ENCODE measurements at regions of chr11 and their contacts with region 1.

Region 1: DNA sequence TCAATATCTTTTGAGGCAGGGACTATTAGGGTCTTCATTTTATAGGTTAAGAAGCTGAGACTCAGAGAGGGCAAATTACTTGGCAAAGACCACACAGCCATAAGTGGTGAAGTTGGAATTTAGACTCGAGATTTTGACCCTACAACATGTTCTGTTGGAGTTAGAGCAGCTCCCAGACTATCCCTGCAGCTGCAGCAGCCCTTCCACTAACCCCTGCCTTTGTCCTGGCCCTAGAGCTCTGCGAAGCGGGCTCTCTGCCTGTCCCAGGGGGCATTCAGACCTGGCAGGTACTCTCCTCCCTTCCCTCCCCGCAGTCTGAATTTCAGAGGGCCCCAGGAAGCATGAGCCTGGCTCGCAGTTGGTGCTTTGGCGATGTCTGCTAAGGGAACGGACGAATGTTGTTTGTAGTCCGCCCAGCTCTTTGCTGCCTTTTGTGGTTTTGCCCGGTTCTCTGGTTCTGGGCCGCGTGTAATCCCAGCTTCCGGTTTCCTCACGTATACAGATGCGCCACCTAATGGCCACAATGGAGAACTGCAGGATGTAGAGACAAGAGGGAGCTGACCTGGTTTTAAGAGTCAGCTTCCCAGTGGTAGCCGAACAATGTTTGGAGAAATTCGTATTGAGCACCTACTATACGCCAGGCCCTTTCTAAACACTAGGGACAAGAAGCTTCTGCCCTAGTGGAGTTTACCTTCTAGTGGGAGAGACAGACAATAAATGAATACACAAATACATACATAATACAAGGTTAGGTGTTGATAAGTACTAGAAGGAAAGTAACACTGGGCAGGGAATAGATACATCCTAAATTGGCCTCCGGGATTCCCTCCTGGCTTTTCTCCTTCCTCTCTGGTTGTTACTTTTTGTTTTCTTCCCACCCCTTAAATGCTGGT is 125.2 kb downstream of the ST3GAL4 start:
- DNase-seq: peak; percentile 83
- H3K4me3 ChIP-seq: peak overlapping the region; percentile 25; the same call in 1 of the 2 replicates
- H3K27ac ChIP-seq: peak overlapping the region; percentile 82
- H3K27me3 ChIP-seq: peaks cover 4% of the 10 kb centered on the region
- CTCF ChIP-seq: peak; percentile 94

Region 2: GRCh38 chr11:125835748-125836147 is 644.9 kb before region 1 on chr11:
- CTCF ChIA-PET with region 1: no interaction called
- POLR2A ChIA-PET with region 1: no interaction called
- DNase-seq: no peak
- H3K4me3 ChIP-seq: no peak overlapping the region
- H3K27ac ChIP-seq: no peak overlapping the region
- H3K27me3 ChIP-seq: no peaks in the 10 kb centered on the region
- CTCF ChIP-seq: no peak

Region 3: DNA sequence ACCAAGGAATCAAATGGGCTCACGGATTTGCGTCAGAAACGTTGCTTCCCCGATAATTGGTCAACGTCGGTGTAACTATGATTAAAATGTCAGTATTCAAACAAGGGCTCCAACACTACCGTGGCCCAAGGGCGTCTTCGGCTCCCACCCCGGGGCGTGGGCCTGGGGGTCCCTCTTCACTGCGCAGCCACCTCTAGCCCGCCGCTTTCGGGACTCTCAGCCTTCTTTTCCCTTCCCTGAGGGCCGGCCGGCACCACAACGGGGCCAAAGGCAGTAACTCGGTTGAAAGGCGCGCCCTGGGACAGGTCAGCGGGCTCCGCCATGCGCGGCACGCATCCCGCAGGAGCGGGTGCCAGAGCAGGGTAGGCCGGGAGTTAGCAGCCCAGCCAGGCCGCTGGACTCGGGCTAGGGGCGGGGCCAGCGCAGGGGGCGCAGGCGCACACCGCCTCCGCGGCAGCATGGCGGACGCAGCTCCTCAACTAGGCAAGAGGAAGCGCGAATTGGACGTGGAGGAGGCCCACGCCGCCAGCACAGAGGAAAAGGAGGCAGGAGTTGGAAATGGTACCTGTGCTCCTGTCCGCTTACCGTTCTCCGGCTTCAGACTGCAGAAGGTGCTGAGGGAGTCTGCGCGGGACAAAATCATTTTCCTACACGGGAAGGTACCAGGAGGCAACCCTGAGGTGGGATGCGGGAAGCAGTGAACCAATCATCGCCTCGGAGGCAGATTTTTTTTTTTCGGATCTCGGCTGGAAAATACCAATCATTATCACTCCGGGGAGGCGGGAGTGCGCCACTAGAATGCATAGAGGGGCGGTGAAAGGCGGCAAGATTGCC is 176.8 kb before region 1 on chr11 and contains the start of gene DCPS:
- CTCF ChIA-PET with region 1: interaction called, 21 read pairs
- POLR2A ChIA-PET with region 1: no interaction called
- DNase-seq: peak; percentile 60
- H3K4me3 ChIP-seq: peak within 1 kb of the TSS; percentile 92
- H3K27ac ChIP-seq: peak within 1 kb of the TSS; percentile 93
- H3K27me3 ChIP-seq: no peaks in the 10 kb centered on the region
- CTCF ChIP-seq: no peak
- polyA plus RNA-seq, gene DCPS: 20.4 and 24.3 TPM in 2 replicates

Region 4: DNA sequence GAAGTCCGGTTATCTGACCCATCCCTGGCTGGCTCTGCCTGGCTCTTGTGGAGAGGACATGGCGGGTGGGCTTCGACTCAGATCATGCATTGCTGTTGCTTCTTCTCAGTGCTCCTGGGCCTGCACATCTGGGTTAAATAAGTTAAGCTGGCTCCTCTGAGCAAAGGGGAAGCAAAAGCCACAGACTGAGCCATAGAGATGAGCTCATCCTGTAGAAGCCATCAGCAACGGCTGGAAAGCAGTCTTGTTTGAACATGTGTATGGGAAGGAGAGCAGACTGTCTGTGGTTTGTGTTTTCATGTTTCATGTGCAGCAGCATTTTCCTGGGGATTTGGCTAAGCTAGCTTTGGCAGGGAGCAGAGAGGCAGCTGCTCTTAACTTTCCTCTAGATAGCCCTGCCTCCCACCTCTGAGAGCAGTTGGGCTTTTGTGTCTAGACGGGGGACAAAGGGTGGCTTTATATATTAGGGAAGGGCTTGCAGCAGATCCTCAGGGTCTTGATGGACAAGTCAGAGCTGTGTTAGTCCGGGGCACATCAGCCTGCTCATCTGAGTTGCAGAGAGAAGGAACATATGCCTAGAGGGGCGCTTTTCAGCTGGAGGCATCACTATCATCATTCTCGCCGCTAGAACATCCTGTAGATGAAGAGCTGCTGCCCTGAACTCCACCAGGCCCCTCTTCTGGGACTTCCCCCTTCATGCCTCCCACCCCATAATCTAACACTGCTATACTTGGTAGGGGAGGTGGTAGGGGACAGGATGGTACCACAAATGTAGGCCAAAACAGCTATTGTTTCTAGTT is 161.9 kb before region 1 on chr11:
- CTCF ChIA-PET with region 1: interaction called, 163 read pairs
- POLR2A ChIA-PET with region 1: interaction called, 3 read pairs
- DNase-seq: peak; percentile 88
- H3K4me3 ChIP-seq: peak overlapping the region; percentile 49
- H3K27ac ChIP-seq: peak overlapping the region; percentile 99
- H3K27me3 ChIP-seq: no peaks in the 10 kb centered on the region
- CTCF ChIP-seq: no peak

Region 5: DNA sequence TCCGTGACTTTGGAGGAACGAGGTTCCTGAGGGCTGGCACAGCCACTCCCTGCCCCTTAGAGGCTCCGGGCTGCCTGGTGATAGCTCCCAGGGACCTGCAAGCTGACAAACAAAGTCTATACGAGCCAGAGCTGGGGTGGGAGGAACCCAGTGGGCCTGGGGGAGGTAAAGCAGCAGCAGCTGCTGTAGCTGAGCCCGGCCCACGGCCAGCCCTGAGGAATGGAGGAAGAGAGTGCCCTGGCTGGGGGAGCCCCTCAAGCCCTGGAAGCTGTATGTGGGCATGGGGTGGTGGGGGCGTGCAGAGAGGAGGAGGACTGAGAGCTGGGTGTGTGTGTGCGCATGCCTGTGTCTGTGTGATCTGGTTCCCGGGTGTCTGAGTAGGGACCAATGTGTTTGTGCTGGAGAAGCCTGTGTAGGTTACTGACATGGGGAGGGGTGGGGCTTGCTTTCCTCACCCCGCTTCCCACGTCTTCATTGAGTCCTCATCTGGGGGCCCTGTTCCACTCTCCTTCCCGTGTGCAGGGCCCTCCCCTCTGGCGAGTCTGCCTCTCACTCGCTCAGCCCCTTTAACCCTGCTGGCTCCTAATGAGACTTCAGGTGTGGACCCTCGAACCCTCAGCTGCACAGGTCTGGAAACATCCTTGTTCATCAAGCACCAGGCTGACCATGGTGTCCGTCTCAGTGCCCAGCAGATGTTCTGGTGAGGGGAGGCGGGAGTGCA is 114.4 kb before region 1 on chr11:
- CTCF ChIA-PET with region 1: no interaction called
- POLR2A ChIA-PET with region 1: no interaction called
- DNase-seq: no peak
- H3K4me3 ChIP-seq: no peak overlapping the region
- H3K27ac ChIP-seq: no peak overlapping the region
- H3K27me3 ChIP-seq: no peaks in the 10 kb centered on the region
- CTCF ChIP-seq: no peak

Region 6: DNA sequence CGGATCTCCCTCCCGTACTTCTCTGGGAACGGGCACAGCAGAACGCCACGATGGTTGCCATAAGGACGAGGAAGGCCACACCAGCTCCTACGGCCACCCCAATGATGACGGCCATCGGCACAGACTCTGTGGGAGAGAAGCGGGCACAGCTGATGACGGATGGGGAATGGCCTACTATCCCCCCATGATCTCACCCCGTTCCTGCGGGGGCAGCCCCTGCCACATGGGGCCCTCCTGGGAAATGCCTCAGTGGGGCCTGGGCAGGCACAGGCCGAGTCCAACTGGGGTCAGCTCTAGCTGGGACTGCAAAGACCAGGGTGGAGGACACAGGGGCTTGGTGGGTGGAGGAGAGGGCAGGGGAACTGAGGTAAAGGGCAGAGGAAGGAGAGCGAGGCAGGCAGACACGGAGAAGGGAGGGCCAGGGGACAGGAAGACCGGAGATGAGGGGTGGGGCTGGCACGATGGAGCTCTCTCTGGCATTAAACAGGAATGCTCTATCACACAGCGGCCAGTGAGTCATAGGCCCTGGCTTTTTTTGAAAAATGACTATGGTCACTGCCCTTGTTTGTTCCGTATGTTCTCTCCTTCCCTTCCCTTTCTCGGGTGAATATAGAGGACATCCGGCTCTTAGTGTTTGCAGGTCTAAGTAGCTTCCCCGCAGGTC is 49.1 kb before region 1 on chr11:
- CTCF ChIA-PET with region 1: interaction called, 22 read pairs
- POLR2A ChIA-PET with region 1: no interaction called
- DNase-seq: no peak
- H3K4me3 ChIP-seq: no peak overlapping the region
- H3K27ac ChIP-seq: peak overlapping the region; percentile 21
- H3K27me3 ChIP-seq: no peaks in the 10 kb centered on the region
- CTCF ChIP-seq: no peak

Region 7: DNA sequence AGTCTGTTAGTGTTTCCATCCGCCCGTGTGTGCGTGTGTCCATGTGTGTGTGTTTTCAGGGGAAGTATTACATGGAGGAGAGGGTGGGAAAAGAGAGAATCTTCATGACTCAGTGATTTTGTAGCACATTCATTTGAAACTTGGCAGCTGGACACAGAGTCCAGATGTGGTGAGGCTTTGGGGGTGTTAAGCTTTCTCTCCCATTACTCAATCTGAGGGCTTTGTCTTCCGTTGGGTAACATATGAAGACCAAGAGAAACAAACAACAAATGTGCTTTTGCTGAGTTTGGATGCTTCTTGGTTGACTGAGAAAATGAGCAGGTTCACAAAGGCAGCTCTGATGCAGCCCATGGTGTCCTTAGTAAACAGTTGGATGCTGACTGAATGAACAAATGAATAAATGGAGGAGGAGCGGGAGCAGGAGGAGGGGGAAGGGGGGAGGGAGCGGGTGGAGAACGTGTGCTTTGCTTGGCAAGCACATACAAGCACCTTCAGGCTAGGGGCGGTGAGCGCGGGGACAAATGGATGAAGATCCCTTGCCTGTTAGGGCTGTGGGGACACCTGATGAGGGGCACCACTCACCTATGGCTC is 20.9 kb before region 1 on chr11:
- CTCF ChIA-PET with region 1: interaction called, 87 read pairs
- POLR2A ChIA-PET with region 1: no interaction called
- DNase-seq: peak; percentile 84
- H3K4me3 ChIP-seq: no peak overlapping the region
- H3K27ac ChIP-seq: peak overlapping the region; percentile 31
- H3K27me3 ChIP-seq: peaks cover 4% of the 10 kb centered on the region
- CTCF ChIP-seq: no peak

Region 8: DNA sequence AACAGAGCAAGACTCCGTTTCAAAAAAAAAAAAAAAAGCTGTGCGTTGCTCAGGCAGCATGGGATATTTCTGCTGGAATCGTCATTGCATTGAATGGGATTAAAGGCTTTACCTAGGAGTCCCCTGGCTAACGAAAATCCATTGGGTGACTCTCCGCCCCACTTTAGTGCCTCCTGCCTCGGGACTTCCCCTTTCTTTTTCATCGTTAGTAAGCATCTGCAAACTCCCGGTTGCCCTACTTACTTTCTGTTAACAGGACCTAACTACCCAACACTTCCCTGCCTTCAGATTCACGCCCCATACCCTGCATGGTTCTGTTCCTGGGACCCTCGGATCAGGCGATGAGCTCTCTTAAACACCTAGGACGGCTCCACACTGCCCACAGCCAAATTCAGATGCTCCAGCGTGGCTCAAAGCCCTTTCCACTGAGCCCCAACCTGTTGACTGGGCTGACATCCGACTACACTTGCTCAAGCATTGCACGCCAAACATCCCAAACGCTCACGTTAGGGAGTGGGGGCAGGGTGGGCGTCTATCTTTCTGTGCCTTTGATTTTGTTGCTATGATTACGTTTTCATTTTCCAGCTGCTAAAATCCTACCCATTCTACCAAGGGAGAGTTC is 18.6 kb after region 1 on chr11:
- CTCF ChIA-PET with region 1: interaction called, 27 read pairs
- POLR2A ChIA-PET with region 1: no interaction called
- DNase-seq: no peak
- H3K4me3 ChIP-seq: no peak overlapping the region
- H3K27ac ChIP-seq: peak overlapping the region; percentile 21
- H3K27me3 ChIP-seq: peaks cover 7% of the 10 kb centered on the region
- CTCF ChIP-seq: no peak

Region 9: DNA sequence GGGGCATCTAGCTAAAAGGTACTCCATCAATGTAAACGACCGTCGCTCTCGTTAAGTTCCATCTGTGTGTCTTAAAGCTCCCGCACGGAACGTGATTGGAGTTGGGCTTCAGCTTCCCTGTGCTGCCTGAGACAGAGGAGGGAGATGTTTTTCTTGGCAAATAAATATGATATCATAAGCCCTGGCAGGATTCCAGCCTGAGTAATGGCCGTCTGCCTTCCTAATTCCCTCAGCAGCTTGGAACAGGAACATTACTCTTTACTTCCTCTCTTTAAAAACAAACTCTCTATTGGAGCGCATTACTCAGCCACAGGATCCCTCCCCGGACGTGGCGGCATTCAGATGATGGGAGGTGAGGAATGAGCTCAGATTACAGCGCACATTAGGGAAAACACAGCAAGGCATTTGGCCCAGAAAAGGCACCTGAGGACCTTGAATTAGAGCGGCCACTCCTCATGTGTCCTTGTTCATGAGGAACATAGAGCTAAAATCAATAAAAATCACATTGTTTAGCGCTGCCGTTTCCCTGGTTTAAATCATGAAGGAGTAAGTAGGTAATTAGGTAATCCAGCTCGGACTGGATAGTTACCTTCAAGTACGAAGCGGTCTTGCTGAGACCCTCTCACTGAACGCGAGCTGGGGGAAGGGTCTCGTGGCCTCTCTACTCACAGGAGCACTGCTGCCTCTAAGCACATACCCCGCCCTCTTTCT is 105.3 kb after region 1 on chr11:
- CTCF ChIA-PET with region 1: interaction called, 11 read pairs
- POLR2A ChIA-PET with region 1: no interaction called
- DNase-seq: peak; percentile 90
- H3K4me3 ChIP-seq: peak overlapping the region; percentile 44
- H3K27ac ChIP-seq: peak overlapping the region; percentile 86
- H3K27me3 ChIP-seq: no peaks in the 10 kb centered on the region
- CTCF ChIP-seq: no peak